ENCODE measurements at regions of chr1 and their contacts with region 1.

Region 1: DNA sequence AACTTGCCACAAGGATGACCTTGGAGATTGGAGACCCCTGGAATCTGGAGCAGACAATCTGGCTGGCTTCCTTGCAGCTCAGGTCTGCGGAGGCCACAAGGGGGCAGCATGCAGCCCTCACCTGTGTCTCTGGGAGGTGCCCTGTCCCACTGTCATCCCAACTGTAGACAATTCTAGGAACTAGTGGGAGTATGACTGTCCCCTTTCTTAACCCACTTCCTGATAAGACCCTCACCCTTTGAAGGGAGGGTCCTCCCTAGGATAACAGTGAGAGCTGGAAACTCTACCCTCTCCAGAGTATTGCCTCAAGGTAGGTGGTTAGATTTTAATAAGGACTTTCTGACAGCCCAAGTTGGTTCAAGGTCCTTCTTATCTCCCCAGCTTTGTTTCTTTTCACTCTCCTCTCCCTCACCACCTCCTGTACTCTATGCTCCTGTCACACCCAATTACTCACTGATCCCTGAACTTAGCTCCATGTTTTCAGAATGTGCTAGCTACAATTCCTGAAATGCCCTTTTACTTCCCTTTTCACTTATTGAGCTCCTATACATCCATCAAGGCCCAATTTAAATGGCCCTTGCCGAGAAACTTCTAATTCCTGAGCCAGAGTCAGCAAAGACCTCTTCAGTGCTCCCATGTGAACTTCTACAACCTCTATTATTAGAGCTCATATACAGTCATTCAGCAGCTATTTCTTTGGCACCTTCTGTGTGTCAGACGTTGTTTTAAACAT is 9.2 kb upstream of the KCNQ4 start:
- DNase-seq: peak; percentile 76
- H3K4me3 ChIP-seq: no peak overlapping the region
- H3K27ac ChIP-seq: peak overlapping the region in 3 of 4 donors; percentile 31 to 52 (median 50)
- H3K4me1 ChIP-seq: peaks cover 0 to 17% (median 13%) of the 10 kb centered on the region in 4 donors
- H3K27me3 ChIP-seq: no peaks in the 10 kb centered on the region
- CTCF ChIP-seq: peak; percentile 33 to 84 (median 68)
- EP300 ChIP-seq: no peak
- POLR2A ChIP-seq: no peak

Region 2: DNA sequence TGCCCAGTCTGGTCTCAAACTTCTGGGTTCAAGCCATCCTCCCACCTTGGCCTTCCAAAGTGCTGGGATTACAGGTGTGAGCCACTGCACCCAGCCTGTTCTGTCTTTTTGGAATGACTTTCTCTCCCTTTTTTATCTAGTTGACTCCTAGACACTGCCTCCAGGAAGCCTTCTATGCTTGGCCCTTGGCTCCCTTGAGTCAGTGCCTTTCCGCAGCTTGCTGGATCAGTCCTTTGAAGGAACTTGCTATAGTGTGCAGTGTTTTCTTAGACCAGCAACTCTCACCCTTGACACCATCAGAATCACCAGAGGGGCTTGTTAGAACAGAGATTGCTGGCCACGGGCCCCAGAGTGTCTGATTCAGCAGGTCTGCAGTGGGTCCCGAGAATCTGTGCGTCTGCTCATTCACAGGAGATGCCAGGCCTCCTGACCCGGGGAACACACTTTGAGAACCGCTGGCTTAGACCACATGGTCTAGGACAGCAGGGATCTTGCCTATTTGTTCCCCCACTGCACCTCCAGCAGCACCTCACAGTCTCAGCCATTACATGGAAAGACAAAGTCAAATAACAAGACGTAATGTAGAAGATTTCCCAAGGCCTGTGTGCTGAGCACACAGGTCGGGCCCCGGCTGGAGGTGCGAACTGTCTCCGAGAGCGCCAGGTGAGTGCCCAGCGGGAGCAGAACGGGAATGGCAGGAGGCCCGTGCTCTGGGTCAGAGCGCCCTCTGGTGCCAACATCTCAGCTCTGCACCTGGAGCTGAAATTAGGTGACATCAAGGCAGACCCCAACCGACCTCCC is 177.7 kb after region 1 on chr1:
- intact Hi-C with region 1: loop called (anchors 2 kb)
- DNase-seq: peak; percentile 87
- H3K4me3 ChIP-seq: no peak overlapping the region
- H3K27ac ChIP-seq: no peak overlapping the region
- H3K4me1 ChIP-seq: peaks cover 0 to 21% (median 15%) of the 10 kb centered on the region in 4 donors
- H3K27me3 ChIP-seq: no peaks in the 10 kb centered on the region
- CTCF ChIP-seq: peak; percentile 86 to 95 (median 90)
- EP300 ChIP-seq: no peak
- POLR2A ChIP-seq: no peak

Measured in sigmoid colon (tissue), 7 donors.